ENCODE measurements at regions of chr13 and their contacts with region 1.

Region 1: GRCh38 chr13:39779337-39780265 is 124.1 kb downstream of the COG6 start:
- DNase-seq: no peak
- ATAC-seq: peak; percentile 73

Region 2: GRCh38 chr13:39803179-39803578 is 23.6 kb after region 1 on chr13:
- intact Hi-C with region 1: no loop called
- DNase-seq: no peak
- ATAC-seq: no peak

Region 3: GRCh38 chr13:39942552-39943273 is 163.1 kb after region 1 on chr13:
- intact Hi-C with region 1: loop called (anchors 10 kb)
- DNase-seq: peak; percentile 79
- ATAC-seq: peak; percentile 93